AG04449 (cell line): ENCODE measurements at regions of chr1 and their contacts with region 1.

Region 1: GRCh38 chr1:204480515-204480914 is 14.1 kb downstream of the PIK3C2B start:
- DNase-seq: no peak
- H3K4me3 ChIP-seq: no peak overlapping the region
- CTCF ChIP-seq: no peak

Region 2: DNA sequence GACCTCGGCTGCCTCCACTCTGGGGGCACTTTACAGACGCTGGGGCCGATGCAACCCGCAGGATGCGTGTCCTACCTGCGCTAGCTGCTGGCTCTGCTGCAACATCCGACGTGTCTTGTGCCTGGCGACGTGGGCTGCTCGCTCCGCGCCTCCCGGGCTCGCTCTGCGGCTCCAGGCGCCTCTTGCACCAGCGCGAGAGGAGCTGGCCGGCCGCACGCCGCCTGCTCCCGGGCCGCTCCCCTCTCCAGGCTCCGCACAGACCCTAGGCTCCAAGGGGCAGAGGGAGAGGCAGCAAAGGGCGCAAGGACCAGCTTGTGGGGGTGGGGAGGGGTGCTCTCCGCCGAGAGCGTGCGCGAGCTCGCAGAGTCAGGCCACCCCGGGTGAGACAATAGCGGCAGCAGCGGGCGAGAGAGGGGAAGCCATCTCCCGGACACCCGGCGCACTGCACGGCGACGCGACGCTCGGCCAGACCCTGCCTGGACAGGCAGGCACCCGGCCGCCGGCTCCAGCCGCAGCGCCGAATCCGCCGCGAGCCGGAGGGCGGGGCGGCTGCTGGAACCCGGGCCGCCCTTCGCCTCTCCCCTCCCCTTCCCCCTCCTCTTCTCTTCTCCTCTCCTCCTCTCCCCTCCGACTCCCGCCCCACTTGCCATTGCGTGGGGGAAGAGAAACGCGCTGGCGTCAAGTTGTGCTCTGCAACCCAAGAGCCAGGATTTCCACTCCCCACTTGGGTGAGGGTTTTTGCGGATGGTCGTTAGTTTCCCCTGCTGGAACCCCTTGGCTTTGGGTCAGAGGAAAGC is 14.0 kb after region 1 on chr1 and contains the start of gene PIK3C2B:
- CTCF ChIA-PET with region 1: interaction called, 15 read pairs
- POLR2A ChIA-PET with region 1: interaction called, 3 read pairs
- DNase-seq: no peak
- H3K4me3 ChIP-seq: peak within 1 kb of the TSS; percentile 94
- CTCF ChIP-seq: peak; percentile 73